ENCODE measurements at regions of chr15 and their contacts with region 1.

Region 1: GRCh38 chr15:63905558-63906265 is 72.0 kb upstream of the HERC1 start:
- DNase-seq: no peak
- H3K4me3 ChIP-seq: no peak overlapping the region
- H3K27ac ChIP-seq: no peak overlapping the region
- H3K4me1 ChIP-seq: peaks cover 0 to 2% (median 0%) of the 10 kb centered on the region in 4 experiments; a peak in 2 of 7 replicates
- H3K27me3 ChIP-seq: no peaks in the 10 kb centered on the region
- CTCF ChIP-seq: no peak
- EP300 ChIP-seq: no peak
- POLR2A ChIP-seq: no peak
- RAD21 ChIP-seq: no peak

Region 2: GRCh38 chr15:63772520-63772919 is 133.2 kb before region 1 on chr15:
- CTCF ChIA-PET with region 1: no interaction called
- POLR2A ChIA-PET with region 1: no interaction called
- DNase-seq: no peak
- H3K4me3 ChIP-seq: no peak overlapping the region
- H3K27ac ChIP-seq: no peak overlapping the region
- H3K4me1 ChIP-seq: peaks cover 0 to 5% (median 0%) of the 10 kb centered on the region in 4 experiments; a peak in 1 of 7 replicates
- H3K27me3 ChIP-seq: no peaks in the 10 kb centered on the region
- CTCF ChIP-seq: no peak
- EP300 ChIP-seq: no peak
- POLR2A ChIP-seq: no peak
- RAD21 ChIP-seq: no peak

Region 3: DNA sequence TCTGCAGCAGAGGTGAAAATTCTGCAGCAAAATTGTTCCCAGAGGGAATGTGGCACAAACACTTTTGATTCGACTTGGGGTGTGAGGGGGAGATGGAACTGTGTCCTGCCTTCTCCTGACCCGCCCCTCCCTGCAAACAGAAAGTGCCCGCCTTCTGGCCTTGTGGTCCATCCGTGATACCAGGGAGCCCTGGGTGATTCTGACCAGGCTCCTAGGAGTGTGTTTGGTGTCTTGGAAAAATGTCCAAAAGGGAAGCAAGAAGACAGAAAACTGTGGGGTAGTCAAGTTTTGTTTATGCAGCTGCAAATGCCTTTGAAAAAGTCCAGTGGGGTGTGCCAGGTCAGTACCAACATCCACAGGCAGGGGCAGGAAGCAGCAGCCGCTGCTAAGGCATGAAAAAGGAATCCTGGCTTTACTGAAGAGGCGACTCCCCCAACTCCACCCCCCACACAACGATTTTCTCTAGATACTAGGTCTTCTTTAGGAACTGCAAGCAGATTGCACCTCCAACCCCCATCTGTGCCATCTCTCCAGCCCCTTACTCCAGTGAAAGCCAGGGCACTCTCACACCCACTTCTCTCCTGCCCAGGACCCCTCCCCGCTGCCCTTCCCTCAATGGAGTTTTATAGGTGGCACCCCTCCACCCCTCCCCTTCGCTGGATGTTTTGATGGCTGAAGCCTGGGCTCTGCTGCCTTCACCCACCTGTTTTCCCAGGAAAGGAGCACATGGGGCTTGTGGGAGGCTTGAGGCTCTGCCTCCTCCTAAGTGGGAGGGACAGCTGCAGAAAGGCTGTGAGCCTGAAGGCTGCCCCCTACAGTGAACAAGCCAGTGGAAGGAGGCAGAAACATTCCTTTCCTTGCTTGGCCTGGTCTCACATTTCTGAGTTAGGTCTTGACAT is 10.4 kb after region 1 on chr15:
- CTCF ChIA-PET with region 1: interaction called, 10 read pairs
- POLR2A ChIA-PET with region 1: interaction called, 5 read pairs
- DNase-seq: peak in 1 of 2 experiments; percentile 68
- H3K4me3 ChIP-seq: no peak overlapping the region
- H3K27ac ChIP-seq: no peak overlapping the region
- H3K4me1 ChIP-seq: peaks cover 0 to 18% (median 7%) of the 10 kb centered on the region in 4 experiments; a peak in 5 of 7 replicates
- H3K27me3 ChIP-seq: no peaks in the 10 kb centered on the region
- CTCF ChIP-seq: peak; percentile 27 to 53 (median 51); a peak in 3 of 4 replicates
- EP300 ChIP-seq: no peak
- POLR2A ChIP-seq: no peak
- RAD21 ChIP-seq: peak in 1 of 2 experiments; percentile 42; a peak in 1 of 4 replicates

Region 4: GRCh38 chr15:63933522-63933921 is 27.8 kb after region 1 on chr15:
- CTCF ChIA-PET with region 1: no interaction called
- POLR2A ChIA-PET with region 1: no interaction called
- DNase-seq: no peak
- H3K4me3 ChIP-seq: no peak overlapping the region
- H3K27ac ChIP-seq: no peak overlapping the region
- H3K4me1 ChIP-seq: no peaks in the 10 kb centered on the region; a peak in 1 of 7 replicates
- H3K27me3 ChIP-seq: no peaks in the 10 kb centered on the region
- CTCF ChIP-seq: no peak
- EP300 ChIP-seq: no peak
- POLR2A ChIP-seq: no peak
- RAD21 ChIP-seq: no peak

Measured in H1 (cell line).